ENCODE measurements at regions of chr3 and their contacts with region 1.

Region 1: GRCh38 chr3:13796701-13797460 is 83.0 kb downstream of the WNT7A start:
- DNase-seq: no peak
- ATAC-seq: no peak
- H3K4me3 ChIP-seq: no peak overlapping the region
- H3K4me3 Mint-ChIP-seq: no peak overlapping the region
- H3K27ac ChIP-seq: no peak overlapping the region
- H3K27ac Mint-ChIP-seq: no peak overlapping the region
- H3K4me1 ChIP-seq: no peaks in the 10 kb centered on the region
- H3K4me1 Mint-ChIP-seq: no peaks in the 10 kb centered on the region
- H3K27me3 ChIP-seq: no peaks in the 10 kb centered on the region
- H3K27me3 Mint-ChIP-seq: peaks cover 4% of the 10 kb centered on the region
- CTCF ChIP-seq: no peak

Region 2: GRCh38 chr3:14371573-14372474 is 574.9 kb after region 1 on chr3:
- CTCF ChIA-PET with region 1: no interaction called
- POLR2A ChIA-PET with region 1: no interaction called
- intact Hi-C with region 1: loop called in 1 of 2 experiments (anchors 5 kb)
- DNase-seq: peak in 2 of 14 experiments; percentile 62 to 68
- ATAC-seq: no peak
- H3K4me3 ChIP-seq: no peak overlapping the region
- H3K4me3 Mint-ChIP-seq: no peak overlapping the region
- H3K27ac ChIP-seq: no peak overlapping the region
- H3K27ac Mint-ChIP-seq: no peak overlapping the region
- H3K4me1 ChIP-seq: peaks cover 20% of the 10 kb centered on the region
- H3K4me1 Mint-ChIP-seq: peaks cover 8% of the 10 kb centered on the region
- H3K27me3 ChIP-seq: no peaks in the 10 kb centered on the region
- H3K27me3 Mint-ChIP-seq: no peaks in the 10 kb centered on the region
- CTCF ChIP-seq: no peak

Measured in CD4-positive, alpha-beta T cell (primary cell).